Activated naive CD4-positive, alpha-beta T cell treated with anti-CD3 and anti-CD28 coated beads for 36 hours (primary cell): ENCODE measurements at regions of chr6 and their contacts with region 1.

Region 1: GRCh38 chr6:121647905-121648304 is 212.5 kb downstream of the GJA1 start:
- DNase-seq: no peak
- H3K4me3 Mint-ChIP-seq: no peak overlapping the region
- H3K27ac Mint-ChIP-seq: no peak overlapping the region
- H3K4me1 Mint-ChIP-seq: peaks cover 44% of the 10 kb centered on the region
- H3K27me3 Mint-ChIP-seq: no peaks in the 10 kb centered on the region

Region 2: DNA sequence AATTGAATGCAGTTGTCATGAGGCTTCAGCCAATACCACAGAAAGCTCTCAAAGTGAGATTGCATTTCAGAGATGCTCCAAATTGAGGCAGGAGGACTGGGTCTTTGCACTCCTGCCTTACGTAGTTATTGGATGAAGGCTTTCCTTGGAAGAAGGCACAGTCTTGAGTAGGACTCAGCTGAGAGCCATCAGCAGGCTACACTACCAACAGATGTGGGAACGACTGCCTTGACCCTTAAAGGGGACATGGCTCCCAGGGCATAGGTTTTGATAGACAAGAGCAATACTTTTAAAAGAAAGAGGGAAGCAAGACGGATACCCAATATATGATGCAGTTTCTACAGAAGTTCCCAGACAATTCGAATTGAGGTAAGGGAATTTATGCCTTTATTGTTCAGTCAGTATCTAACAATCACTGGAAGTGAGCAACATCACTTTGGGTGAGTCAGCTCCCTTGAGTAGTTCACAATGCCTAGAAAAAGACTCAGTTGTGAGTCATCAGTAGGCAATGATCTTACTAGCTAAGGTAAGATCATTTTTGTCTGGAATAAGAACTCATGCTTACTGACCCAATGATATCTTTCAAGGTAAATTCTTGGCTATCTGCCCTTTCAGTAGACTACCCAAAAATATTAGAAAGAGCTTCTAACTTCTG is 178.4 kb after region 1 on chr6:
- CTCF ChIA-PET with region 1: no interaction called
- intact Hi-C with region 1: loop called (anchors 5 kb)
- DNase-seq: no peak
- H3K4me3 Mint-ChIP-seq: no peak overlapping the region
- H3K27ac Mint-ChIP-seq: no peak overlapping the region
- H3K4me1 Mint-ChIP-seq: peaks cover 5% of the 10 kb centered on the region
- H3K27me3 Mint-ChIP-seq: peaks cover 2% of the 10 kb centered on the region